Activated T-helper 2 cell treated with anti-CD3 and anti-CD28 coated beads, Interferon-gamma antibody, Interleukin-2, Interleukin-4, amounts not matched to agents 10 μg/mL and 5 μg/mL and 100 μg/mL, durations not matched to agents 14 hours and 24 hours and 36 hours (primary cell): ENCODE measurements at regions of chr20 and their contacts with region 1.

Region 1: DNA sequence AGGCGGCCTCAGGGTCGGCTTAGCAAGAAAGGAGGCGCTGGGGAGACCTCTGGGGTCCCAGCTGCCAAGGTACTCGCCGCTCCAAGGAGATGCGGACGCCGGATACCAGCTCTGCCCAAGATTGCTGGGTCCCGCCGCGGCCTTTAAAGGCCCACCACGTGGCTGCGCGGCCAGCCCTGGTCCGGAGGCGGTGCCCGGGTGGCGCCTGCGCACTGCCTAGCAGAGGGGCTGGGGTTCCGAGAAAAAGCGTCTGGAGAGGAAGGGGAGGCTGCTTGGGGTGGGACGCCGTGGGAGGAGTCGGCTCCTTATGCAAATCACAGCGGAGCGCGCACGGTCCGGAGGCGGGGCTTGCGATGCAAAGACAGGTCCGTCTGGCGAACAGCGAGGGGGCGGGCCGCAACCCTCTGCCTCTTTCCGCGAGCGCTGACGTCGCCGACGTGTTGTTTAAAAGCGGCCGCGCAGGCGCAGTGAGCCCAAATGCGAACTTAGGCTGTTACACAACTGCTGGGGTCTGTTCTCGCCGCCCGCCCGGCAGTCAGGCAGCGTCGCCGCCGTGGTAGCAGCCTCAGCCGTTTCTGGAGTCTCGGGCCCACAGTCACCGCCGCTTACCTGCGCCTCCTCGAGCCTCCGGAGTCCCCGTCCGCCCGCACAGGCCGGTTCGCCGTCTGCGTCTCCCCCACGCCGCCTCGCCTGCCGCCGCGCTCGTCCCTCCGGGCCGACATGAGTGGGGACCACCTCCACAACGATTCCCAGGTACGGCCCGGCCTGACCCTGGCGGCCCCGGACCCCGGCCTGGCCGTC is at the start of gene TOP1:
- DNase-seq: peak; percentile 100
- H3K4me3 Mint-ChIP-seq: peak within 1 kb of the TSS; percentile 82
- H3K27ac Mint-ChIP-seq: peak within 1 kb of the TSS; percentile 76
- H3K4me1 Mint-ChIP-seq: peaks cover 41% of the 10 kb centered on the region
- H3K27me3 Mint-ChIP-seq: no peaks in the 10 kb centered on the region
- total RNA-seq, gene TOP1: 116 and 118 TPM in 2 replicates

Region 2: GRCh38 chr20:40990542-40991120 is 37.9 kb before region 1 on chr20:
- intact Hi-C with region 1: loop called (anchors 1 kb)
- DNase-seq: peak; percentile 59
- H3K4me3 Mint-ChIP-seq: no peak overlapping the region
- H3K27ac Mint-ChIP-seq: peak overlapping the region; percentile 69
- H3K4me1 Mint-ChIP-seq: peaks cover 33% of the 10 kb centered on the region
- H3K27me3 Mint-ChIP-seq: no peaks in the 10 kb centered on the region

Region 3: DNA sequence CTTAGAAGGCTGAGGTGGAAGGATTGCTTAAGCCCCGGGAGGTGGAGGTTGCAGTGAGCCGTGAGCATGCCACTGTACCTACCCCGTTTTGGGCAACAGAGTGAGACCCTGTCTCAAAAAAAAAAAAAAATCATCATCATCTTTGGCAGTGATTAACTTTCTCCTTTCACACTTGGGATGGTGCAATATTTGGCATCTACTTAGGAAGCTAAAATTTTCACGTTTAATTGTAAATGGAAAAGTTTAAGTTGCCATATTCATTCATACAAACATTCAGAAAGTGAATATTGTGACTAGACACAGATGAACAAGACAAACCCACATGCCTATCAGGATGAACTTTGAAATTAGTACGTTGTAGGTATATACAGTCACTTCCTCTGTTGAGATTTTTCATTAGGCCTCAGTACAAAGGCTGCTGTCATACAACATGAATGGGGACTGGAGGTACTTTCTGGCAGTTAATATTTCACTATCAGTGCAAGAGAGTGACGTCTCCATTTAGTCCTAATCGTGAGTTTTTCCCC is 10.4 kb after region 1 on chr20:
- intact Hi-C with region 1: loop called (anchors 1 kb)
- DNase-seq: no peak
- H3K4me3 Mint-ChIP-seq: no peak overlapping the region
- H3K27ac Mint-ChIP-seq: peak overlapping the region; percentile 84
- H3K4me1 Mint-ChIP-seq: peaks cover 82% of the 10 kb centered on the region
- H3K27me3 Mint-ChIP-seq: no peaks in the 10 kb centered on the region

Region 4: GRCh38 chr20:41047975-41048305 is 19.4 kb after region 1 on chr20:
- intact Hi-C with region 1: loop called (anchors 2 kb)
- DNase-seq: no peak
- H3K4me3 Mint-ChIP-seq: peak overlapping the region; percentile 78
- H3K27ac Mint-ChIP-seq: peak overlapping the region; percentile 91
- H3K4me1 Mint-ChIP-seq: peaks cover 83% of the 10 kb centered on the region
- H3K27me3 Mint-ChIP-seq: no peaks in the 10 kb centered on the region

Region 5: DNA sequence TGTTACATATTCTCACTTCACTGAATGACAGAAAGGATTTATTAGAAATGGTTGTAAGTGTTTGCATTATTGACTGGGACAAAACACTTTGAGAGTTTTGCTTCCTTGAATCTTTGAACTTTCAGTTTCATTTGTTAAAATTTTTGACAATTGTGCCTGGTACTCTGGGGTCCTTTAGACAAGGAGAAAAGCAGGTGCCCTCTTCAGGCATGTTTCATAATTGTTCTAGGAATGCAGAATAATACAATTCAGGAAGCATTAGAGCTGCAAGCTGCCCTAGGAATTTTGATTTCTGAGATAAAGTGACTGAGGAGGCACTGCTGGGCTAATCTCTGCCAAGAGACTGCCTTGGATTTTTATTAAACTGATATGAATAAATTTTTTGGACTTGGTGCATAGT is 49.8 kb after region 1 on chr20:
- intact Hi-C with region 1: loop called (anchors 2 kb)
- DNase-seq: no peak
- H3K4me3 Mint-ChIP-seq: no peak overlapping the region
- H3K27ac Mint-ChIP-seq: peak overlapping the region; percentile 14
- H3K4me1 Mint-ChIP-seq: peaks cover 68% of the 10 kb centered on the region
- H3K27me3 Mint-ChIP-seq: no peaks in the 10 kb centered on the region